Ascending aorta (tissue), 2 donors: ENCODE measurements at regions of chr7 and their contacts with region 1.

Region 1: GRCh38 chr7:21427182-21427870 is 557 bp upstream of the SP4 start:
- DNase-seq: peak; percentile 95 to 99
- H3K4me3 ChIP-seq: peak overlapping the region; percentile 55 to 87
- H3K27ac ChIP-seq: peak overlapping the region; percentile 97 to 98
- H3K4me1 ChIP-seq: peaks cover 0 to 6% of the 10 kb centered on the region in 2 donors
- H3K27me3 ChIP-seq: no peaks in the 10 kb centered on the region
- CTCF ChIP-seq: peak in 2 of 3 experiments; percentile 4 to 8

Region 2: GRCh38 chr7:20906801-20907453 is 520.4 kb before region 1 on chr7:
- intact Hi-C with region 1: no loop called
- DNase-seq: no peak
- H3K4me3 ChIP-seq: no peak overlapping the region
- H3K27ac ChIP-seq: no peak overlapping the region
- H3K4me1 ChIP-seq: no peaks in the 10 kb centered on the region
- H3K27me3 ChIP-seq: no peaks in the 10 kb centered on the region
- CTCF ChIP-seq: no peak

Region 3: DNA sequence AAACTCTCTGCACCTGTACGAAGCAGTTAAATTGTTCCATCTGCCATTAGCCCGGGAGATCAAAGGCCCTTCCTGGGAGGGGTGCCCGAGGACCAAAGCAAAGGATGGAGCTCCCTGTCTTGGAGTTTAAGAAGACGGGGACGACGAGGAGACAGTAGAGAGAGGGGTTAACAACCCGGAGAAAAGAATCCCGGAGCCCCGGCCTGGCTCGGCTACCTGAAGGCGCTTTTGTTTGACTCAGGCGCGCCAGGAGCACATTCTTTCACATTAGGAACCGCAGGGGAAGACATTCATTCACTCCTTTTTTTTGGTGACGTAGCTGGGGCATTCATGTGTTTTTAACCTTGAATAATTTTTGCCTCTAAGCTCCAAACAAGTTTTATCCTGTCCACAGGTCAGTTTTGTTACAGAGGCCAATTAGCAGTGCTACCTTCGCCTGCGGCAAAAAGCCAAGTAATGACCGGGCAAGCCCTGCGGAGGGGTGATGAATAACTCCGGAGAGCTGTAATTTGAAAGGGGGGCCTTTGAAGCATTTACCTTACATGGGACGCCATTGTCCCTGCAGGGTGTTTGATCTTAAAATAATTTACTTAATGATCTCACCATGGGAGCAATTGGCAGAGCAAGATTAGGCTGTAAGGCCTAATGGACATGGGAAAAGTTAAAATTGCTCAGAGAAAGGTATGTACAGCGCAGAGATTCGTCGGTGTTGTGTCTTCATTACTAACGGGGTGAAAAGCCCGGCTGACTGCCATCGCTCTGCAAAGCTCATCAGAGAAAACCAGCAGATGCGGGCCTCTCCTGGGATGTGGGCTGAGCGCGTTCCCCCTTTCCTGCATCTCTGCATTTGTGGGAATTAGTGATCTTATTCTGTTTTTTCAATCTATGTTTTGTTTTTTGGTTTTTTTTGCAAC is 257.4 kb before region 1 on chr7:
- intact Hi-C with region 1: no loop called
- DNase-seq: no peak
- H3K4me3 ChIP-seq: no peak overlapping the region
- H3K27ac ChIP-seq: no peak overlapping the region
- H3K4me1 ChIP-seq: no peaks in the 10 kb centered on the region
- H3K27me3 ChIP-seq: no peaks in the 10 kb centered on the region
- CTCF ChIP-seq: no peak

Region 4: GRCh38 chr7:21480693-21481403 is 53.5 kb after region 1 on chr7:
- intact Hi-C with region 1: no loop called
- DNase-seq: no peak
- H3K4me3 ChIP-seq: no peak overlapping the region
- H3K27ac ChIP-seq: no peak overlapping the region
- H3K4me1 ChIP-seq: no peaks in the 10 kb centered on the region
- H3K27me3 ChIP-seq: no peaks in the 10 kb centered on the region
- CTCF ChIP-seq: no peak

Region 5: DNA sequence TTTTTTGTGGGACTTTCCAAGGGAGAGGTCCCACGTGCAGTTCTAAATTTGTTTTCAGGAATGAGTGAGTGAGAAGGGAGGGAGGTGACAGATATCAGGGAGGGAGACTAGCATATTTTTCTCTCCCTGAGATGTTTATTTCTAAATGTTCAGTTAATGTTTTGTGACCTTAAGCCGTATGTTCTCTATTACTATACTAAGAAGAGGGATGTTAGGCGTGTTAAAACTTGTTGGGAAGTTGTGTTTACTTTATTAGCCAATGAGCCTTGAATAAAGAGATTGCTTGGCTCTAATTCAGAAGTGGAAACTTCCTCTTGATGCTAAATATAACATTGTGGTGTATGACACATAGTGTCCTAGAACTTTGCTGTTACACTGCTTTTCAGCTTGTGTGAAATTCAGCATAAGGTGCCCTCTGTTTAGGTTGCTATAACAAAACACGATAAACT is 152.8 kb after region 1 on chr7:
- intact Hi-C with region 1: loop called (anchors 1 kb)
- DNase-seq: no peak
- H3K4me3 ChIP-seq: no peak overlapping the region
- H3K27ac ChIP-seq: peak overlapping the region in 1 of 2 donors; percentile 19
- H3K4me1 ChIP-seq: no peaks in the 10 kb centered on the region
- H3K27me3 ChIP-seq: no peaks in the 10 kb centered on the region
- CTCF ChIP-seq: no peak

Region 6: DNA sequence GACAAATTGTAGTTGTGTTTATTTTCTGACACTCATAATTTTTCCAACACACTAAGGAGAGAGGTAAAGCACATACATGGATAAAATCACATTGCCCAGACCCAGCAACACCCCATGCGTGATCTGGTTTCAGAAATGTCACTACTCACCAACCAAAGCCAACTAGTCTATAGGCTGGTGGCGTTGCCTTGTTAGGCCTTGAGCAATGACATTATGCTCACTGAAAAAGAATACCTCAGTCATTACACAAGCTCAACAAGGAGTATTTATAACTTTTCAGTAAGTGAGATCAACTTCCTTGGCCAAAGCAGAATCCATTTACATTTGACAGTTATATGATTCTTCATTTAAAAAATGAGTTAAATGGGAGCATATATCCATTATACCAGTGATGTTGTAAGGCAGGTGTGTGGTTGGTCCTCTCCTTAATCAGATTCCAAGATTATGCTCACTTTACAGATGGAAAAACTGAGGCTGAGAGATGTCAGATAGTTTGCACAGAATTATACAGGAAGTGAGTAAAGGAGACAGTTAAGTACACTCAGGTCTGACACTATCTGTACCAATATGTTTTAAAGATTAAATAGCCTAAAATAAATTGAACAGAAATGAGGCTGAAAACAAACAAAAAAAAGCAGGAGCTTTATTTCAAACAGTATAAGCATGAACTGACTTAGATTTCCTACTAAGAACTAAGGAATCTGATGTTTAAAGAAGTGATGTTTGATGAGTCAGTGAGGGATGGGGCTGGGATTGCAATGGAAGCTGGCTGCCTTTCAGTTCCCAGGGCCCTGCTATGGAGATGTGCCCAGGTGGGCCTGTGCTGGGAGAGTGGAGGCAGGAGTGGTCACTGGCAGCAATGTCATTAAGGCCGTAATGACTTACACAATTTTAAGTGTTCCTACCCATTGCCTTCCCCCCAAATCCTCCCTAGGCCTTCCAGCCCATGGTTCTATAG is 811.3 kb after region 1 on chr7:
- intact Hi-C with region 1: loop called (anchors 10 kb)
- DNase-seq: no peak
- H3K4me3 ChIP-seq: no peak overlapping the region
- H3K27ac ChIP-seq: no peak overlapping the region
- H3K4me1 ChIP-seq: peaks cover 0 to 7% of the 10 kb centered on the region in 2 donors
- H3K27me3 ChIP-seq: no peaks in the 10 kb centered on the region
- CTCF ChIP-seq: no peak

Region 7: DNA sequence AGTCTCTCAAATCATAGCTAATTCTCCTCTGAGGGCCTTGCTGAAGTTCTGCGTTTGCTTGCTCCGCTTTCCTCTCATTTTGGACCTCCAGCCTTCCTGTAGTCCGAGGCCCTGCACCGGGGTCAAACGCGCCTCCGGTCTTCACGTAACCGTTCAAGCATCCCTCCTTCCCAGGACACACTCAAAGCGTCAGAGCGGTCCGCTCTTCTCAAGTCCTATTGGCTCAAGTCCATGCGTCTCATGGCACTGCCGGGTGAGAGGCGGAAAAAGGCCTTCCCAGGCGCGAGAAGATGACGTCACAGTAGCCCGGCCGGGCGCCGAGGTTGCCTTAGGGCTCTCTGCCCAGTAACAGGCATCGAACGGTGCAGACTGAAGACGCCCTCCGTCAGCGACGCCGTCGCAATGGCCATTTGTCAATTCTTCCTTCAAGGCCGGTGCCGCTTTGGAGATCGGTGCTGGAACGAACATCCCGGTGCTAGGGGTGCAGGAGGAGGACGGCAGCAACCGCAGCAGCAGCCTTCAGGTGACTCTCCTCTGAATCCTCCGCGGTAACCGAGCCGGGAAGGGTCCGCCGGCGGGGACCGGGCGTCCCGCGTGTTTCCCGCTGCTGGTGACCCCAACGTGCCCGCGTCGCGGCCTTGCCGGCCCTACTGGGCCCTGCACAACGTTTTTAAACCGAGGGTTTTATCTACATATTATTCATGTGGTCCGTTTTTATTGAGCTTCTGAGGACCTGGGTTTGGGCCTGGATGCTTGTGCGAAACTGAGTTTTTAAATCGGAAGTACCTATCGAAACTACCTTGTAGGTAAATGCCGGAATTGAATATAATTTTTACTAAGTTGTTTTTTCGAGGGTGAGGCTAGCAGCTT is 1754.6 kb after region 1 on chr7 and contains the start of gene NUP42:
- intact Hi-C with region 1: loop called (anchors 5 kb)
- DNase-seq: peak; percentile 90 to 98
- H3K4me3 ChIP-seq: peak within 1 kb of the TSS; percentile 63 to 93
- H3K27ac ChIP-seq: peak within 1 kb of the TSS; percentile 90 to 96
- H3K4me1 ChIP-seq: peaks cover 3 to 15% of the 10 kb centered on the region in 2 donors
- H3K27me3 ChIP-seq: no peaks in the 10 kb centered on the region
- CTCF ChIP-seq: peak in 1 of 3 experiments; percentile 13
- total RNA-seq, gene NUP42: 16.7 TPM